ENCODE measurements at regions of chr10 and their contacts with region 1.

Region 1: GRCh38 chr10:68301790-68302502 is 29.9 kb upstream of the HNRNPH3 start:
- DNase-seq: peak; percentile 78
- H3K4me3 ChIP-seq: no peak overlapping the region
- H3K27ac ChIP-seq: no peak overlapping the region
- H3K4me1 ChIP-seq: peaks cover 5% of the 10 kb centered on the region
- H3K27me3 ChIP-seq: no peaks in the 10 kb centered on the region
- CTCF ChIP-seq: peak; percentile 69

Region 2: GRCh38 chr10:67521546-67521945 is 780.4 kb before region 1 on chr10:
- CTCF ChIA-PET with region 1: no interaction called
- POLR2A ChIA-PET with region 1: no interaction called
- intact Hi-C with region 1: no loop called
- DNase-seq: no peak
- H3K4me3 ChIP-seq: no peak overlapping the region
- H3K27ac ChIP-seq: no peak overlapping the region
- H3K4me1 ChIP-seq: no peaks in the 10 kb centered on the region
- H3K27me3 ChIP-seq: no peaks in the 10 kb centered on the region
- CTCF ChIP-seq: no peak

Region 3: DNA sequence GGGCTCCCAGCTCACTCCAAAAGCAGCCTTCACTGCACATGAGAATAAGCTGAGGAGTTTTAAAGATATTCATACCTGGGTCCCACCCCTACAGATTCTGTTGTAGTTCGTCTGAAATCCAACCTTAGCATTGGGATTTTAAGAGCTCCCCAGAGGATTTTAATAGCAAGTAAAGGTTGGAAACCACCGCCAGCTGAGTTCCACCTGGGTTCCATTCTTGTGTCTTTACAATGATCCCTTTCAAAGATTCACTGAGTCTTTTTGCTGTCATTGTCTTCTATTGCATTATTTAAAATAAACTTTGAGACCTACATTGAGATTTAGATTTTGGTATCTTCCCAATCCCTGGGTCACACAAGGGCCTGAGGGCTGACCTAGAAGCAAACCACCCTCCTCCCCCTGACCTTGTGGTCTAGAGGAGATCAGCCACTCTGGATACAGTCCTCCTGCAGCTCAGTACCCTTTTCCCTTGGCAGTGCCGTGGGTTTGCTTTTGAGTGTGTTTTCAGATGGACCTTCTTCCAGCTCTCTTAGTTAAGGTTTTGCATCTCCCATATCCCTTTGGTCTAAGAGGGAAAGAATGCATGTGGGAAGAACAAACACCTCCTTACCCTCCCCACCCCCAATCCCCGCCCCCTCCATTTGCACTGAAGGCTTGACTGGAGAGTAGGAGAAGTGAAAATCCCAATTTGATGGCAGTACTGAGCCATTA is 440.0 kb before region 1 on chr10:
- CTCF ChIA-PET with region 1: no interaction called
- POLR2A ChIA-PET with region 1: no interaction called
- intact Hi-C with region 1: loop called (anchors 5 kb)
- DNase-seq: no peak
- H3K4me3 ChIP-seq: no peak overlapping the region
- H3K27ac ChIP-seq: no peak overlapping the region
- H3K4me1 ChIP-seq: peaks cover 19% of the 10 kb centered on the region
- H3K27me3 ChIP-seq: no peaks in the 10 kb centered on the region
- CTCF ChIP-seq: no peak

Region 4: DNA sequence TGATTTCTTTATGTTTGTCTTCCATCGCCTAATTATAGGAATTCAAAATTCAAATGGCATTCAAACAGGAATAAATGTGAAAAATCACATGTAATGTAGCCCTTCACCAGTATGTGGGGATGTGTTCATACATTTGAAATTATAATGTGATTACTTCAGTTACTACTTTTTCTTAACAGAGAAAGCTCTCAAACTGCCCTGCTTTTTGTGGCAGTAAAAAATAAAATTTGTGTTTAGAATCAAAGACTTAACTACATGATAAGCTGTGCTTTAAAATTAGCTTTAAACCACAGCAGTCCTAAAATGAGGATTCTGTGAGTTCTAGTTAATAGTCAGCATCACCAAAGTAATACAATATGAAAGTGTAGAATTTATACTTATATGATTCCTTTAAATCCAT is 219.1 kb before region 1 on chr10:
- CTCF ChIA-PET with region 1: no interaction called
- POLR2A ChIA-PET with region 1: no interaction called
- intact Hi-C with region 1: loop called (anchors 5 kb)
- DNase-seq: peak; percentile 66
- H3K4me3 ChIP-seq: no peak overlapping the region
- H3K27ac ChIP-seq: peak overlapping the region; percentile 34
- H3K4me1 ChIP-seq: peaks cover 27% of the 10 kb centered on the region
- H3K27me3 ChIP-seq: no peaks in the 10 kb centered on the region
- CTCF ChIP-seq: peak; percentile 66

Region 5: GRCh38 chr10:68231106-68231816 is 70.7 kb before region 1 on chr10:
- CTCF ChIA-PET with region 1: no interaction called
- POLR2A ChIA-PET with region 1: no interaction called
- intact Hi-C with region 1: loop called (anchors 5 kb)
- DNase-seq: peak; percentile 79
- H3K4me3 ChIP-seq: peak overlapping the region; percentile 47
- H3K27ac ChIP-seq: no peak overlapping the region
- H3K4me1 ChIP-seq: no peaks in the 10 kb centered on the region
- H3K27me3 ChIP-seq: peaks cover 6% of the 10 kb centered on the region
- CTCF ChIP-seq: 0 out of 2 replicates have a peak, but pooled peaks have one; percentile 30

Region 6: GRCh38 chr10:68362590-68362989 is 60.6 kb after region 1 on chr10:
- CTCF ChIA-PET with region 1: no interaction called
- POLR2A ChIA-PET with region 1: interaction called, 12 read pairs
- intact Hi-C with region 1: no loop called
- DNase-seq: no peak
- H3K4me3 ChIP-seq: no peak overlapping the region
- H3K27ac ChIP-seq: no peak overlapping the region
- H3K4me1 ChIP-seq: no peaks in the 10 kb centered on the region
- H3K27me3 ChIP-seq: no peaks in the 10 kb centered on the region
- CTCF ChIP-seq: no peak